Activated B cell treated with CpG ODN at 0.5 μM for 24 hours (primary cell): ENCODE measurements at regions of chrX and their contacts with region 1.

Region 1: GRCh38 chrX:56563231-56564161 is at the start of gene UBQLN2:
- DNase-seq: peak; percentile 61
- ATAC-seq: peak; percentile 87
- H3K4me3 Mint-ChIP-seq: peak within 1 kb of the TSS; percentile 88
- H3K27ac Mint-ChIP-seq: peak within 1 kb of the TSS; percentile 96
- H3K4me1 Mint-ChIP-seq: peaks cover 28% of the 10 kb centered on the region
- H3K27me3 Mint-ChIP-seq: no peaks in the 10 kb centered on the region
- CTCF ChIP-seq: no peak
- total RNA-seq, gene UBQLN2: 21.3 and 26.6 TPM in 2 replicates

Region 2: DNA sequence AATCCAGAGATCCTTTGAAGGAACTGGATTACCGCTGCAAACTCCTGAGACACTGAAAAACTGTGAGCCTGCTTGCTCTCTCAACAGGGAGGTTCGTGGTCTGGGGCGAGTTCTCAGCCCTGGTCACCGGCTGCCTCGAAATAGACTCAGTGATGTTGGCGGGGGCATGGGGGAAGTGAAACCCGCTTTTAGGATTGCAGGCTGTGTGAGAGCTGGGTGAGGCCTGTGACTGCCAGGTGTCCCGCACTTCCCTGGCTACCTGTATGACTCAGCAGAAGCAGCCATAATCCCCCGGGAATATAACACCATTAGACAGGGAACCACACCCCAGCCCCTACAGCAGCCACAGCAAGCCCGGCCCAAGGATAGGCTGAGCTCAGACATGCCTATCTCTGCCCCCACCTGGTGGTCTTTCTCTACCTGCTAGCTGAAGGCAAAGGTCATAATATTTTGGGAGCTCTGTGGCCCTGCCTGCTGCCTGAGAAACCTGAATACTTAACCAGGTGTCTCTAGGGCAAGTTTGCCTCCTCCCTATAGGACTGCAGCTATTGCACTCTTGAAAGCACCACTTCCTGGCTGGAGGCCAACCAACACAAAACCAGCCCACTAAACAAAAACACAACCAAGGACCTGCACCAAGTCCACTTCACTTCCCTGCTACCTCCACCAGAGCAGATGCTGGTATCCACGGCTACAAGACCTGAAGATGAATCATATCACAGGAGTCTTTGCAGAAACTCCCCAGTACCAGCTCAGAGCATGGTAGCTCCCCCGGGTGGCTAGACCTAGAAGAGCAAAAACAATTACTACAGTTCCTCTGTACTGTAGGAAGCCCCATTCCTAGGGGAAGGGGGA is 643.9 kb before region 1 on chrX:
- CTCF ChIA-PET with region 1: no interaction called
- POLR2A ChIA-PET with region 1: no interaction called
- intact Hi-C with region 1: loop called (anchors 5 kb)
- DNase-seq: peak; percentile 50
- ATAC-seq: peak; percentile 88
- H3K4me3 Mint-ChIP-seq: peak overlapping the region; percentile 52
- H3K27ac Mint-ChIP-seq: peak overlapping the region; percentile 79
- H3K4me1 Mint-ChIP-seq: peaks cover 38% of the 10 kb centered on the region
- H3K27me3 Mint-ChIP-seq: no peaks in the 10 kb centered on the region
- CTCF ChIP-seq: no peak

Region 3: GRCh38 chrX:56232221-56233082 is 331.0 kb before region 1 on chrX and contains the start of gene KLF8:
- CTCF ChIA-PET with region 1: no interaction called
- POLR2A ChIA-PET with region 1: no interaction called
- intact Hi-C with region 1: loop called (anchors 5 kb)
- DNase-seq: peak; percentile 25
- ATAC-seq: peak; percentile 83
- H3K4me3 Mint-ChIP-seq: peak within 1 kb of the TSS; percentile 88
- H3K27ac Mint-ChIP-seq: peak within 1 kb of the TSS; percentile 83
- H3K4me1 Mint-ChIP-seq: peaks cover 38% of the 10 kb centered on the region
- H3K27me3 Mint-ChIP-seq: no peaks in the 10 kb centered on the region
- CTCF ChIP-seq: no peak
- total RNA-seq, gene KLF8: 15.2 and 17.8 TPM in 2 replicates

Region 4: DNA sequence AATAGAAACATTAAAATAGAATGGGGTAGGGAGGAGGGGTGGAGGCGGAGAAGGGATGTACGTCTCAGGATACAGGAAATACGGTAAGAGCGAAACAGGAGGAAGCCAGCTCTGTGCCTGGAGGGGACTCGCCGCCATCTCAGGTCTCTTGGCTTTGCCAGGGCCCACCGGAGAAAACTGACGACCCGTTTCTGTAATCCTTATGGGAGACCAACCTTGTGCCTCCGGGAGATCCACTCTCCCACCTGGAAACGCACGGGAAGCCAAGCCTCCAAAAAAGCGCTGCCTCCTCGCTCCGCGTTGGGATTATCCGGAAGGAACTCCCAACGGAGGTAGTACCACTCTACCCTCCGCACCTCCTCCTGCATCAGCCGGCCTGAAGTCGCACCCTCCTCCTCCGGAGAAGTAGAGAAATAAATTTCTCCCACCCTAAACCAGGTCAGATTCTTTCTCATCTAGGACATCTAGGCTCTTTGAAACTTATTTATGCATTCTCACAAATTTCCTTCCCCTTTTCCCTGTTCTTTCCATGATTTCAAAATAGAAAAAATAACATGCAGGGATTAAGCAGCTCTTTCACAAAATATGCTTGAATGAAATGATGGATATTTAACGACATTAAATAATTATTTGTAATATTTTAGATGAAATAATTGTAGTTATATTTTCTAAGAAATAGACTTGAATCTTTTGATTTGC is 165.8 kb after region 1 on chrX and contains the start of gene NBDY:
- CTCF ChIA-PET with region 1: no interaction called
- POLR2A ChIA-PET with region 1: interaction called, 7 read pairs
- intact Hi-C with region 1: loop called (anchors 2 kb)
- DNase-seq: peak; percentile 20
- ATAC-seq: peak; percentile 78
- H3K4me3 Mint-ChIP-seq: peak within 1 kb of the TSS; percentile 94
- H3K27ac Mint-ChIP-seq: peak within 1 kb of the TSS; percentile 92
- H3K4me1 Mint-ChIP-seq: peaks cover 25% of the 10 kb centered on the region
- H3K27me3 Mint-ChIP-seq: no peaks in the 10 kb centered on the region
- CTCF ChIP-seq: no peak
- total RNA-seq, gene NBDY: 30.0 and 41.0 TPM in 2 replicates

Region 5: DNA sequence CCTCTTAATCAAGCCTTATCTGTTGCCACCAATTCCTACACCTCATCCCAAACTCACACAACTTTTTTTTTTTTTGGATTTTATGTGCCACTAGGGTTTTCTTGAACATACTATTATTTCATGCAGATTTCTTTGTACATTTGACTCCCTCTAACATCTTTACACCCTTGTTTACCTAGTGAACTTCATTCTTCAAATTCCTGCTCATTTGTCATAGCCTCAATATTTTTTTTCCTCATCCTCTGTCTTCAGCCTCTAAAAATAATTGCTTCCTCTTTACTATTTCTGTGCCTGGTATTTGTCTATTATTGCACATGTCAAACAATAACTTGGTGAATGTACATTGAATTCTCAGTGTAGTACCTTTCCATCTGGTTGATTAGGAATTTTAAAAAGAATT is 187.6 kb after region 1 on chrX:
- CTCF ChIA-PET with region 1: no interaction called
- POLR2A ChIA-PET with region 1: no interaction called
- intact Hi-C with region 1: no loop called
- DNase-seq: no peak
- ATAC-seq: no peak
- H3K4me3 Mint-ChIP-seq: no peak overlapping the region
- H3K27ac Mint-ChIP-seq: no peak overlapping the region
- H3K4me1 Mint-ChIP-seq: peaks cover 27% of the 10 kb centered on the region
- H3K27me3 Mint-ChIP-seq: no peaks in the 10 kb centered on the region
- CTCF ChIP-seq: no peak

Region 6: DNA sequence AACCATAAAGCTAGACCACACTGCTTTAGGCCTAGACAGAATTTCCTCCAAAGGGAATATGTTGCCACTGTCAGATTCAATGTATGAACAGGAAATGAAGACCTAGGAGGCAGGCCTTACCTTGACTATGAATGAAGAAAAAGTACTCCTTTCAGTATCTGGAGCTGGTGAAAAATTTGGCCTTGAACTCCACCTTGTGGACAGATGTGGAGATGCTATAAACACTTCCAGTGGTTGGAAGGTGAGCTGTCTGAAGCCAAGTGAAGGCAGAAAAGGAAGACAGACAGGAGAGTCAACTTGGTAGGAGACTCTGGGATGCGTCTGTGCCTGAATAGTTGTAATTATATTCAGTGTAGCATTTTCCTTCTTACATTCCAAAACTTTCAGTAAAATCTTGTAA is 414.7 kb after region 1 on chrX:
- CTCF ChIA-PET with region 1: no interaction called
- POLR2A ChIA-PET with region 1: no interaction called
- intact Hi-C with region 1: loop called (anchors 10 kb)
- DNase-seq: no peak
- ATAC-seq: peak; percentile 66
- H3K4me3 Mint-ChIP-seq: no peak overlapping the region
- H3K27ac Mint-ChIP-seq: no peak overlapping the region
- H3K4me1 Mint-ChIP-seq: no peaks in the 10 kb centered on the region
- H3K27me3 Mint-ChIP-seq: no peaks in the 10 kb centered on the region
- CTCF ChIP-seq: no peak

Region 7: DNA sequence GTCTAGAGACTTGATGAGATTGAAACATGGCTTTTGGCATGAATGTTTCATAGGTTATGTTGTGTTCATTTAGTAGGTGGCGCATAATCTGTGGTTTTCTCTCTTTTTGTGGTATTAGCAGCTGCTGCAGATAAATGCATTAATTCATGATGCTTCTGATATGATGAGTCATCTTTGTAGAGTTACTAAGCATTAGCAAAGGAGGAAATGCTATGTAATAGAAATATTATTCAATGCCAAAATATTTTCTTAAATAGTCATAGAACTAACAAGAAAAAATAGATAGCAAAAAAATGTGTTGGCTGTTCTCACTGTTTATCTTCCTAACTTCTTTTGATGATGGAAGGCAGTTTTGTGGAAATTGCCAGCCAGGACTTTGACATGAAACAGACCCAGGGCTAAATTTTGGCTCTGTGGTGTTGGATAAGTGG is 1031.9 kb after region 1 on chrX:
- CTCF ChIA-PET with region 1: no interaction called
- POLR2A ChIA-PET with region 1: no interaction called
- intact Hi-C with region 1: loop called (anchors 2 kb)
- DNase-seq: no peak
- ATAC-seq: no peak
- H3K4me3 Mint-ChIP-seq: peak overlapping the region; percentile 74
- H3K27ac Mint-ChIP-seq: peak overlapping the region; percentile 35
- H3K4me1 Mint-ChIP-seq: peaks cover 49% of the 10 kb centered on the region
- H3K27me3 Mint-ChIP-seq: no peaks in the 10 kb centered on the region
- CTCF ChIP-seq: no peak

Region 8: DNA sequence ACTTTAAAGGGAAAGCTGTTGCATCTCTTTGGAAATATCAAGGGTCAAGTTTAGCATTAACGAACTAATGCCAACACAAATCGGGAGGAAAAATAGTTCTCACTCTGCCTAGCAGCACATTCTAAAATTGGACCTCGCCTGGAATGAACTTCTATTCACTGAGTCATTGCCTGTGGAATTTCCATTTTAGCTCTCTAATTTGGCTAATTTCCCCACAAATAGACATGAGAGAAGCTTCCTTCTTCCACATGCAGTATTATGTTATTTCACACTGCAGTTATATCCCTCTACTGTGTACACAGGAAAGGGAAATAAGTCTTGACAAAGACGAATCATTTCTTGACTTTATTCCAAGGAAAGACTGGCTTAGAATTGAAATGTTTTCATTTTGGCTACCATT is 1337.5 kb after region 1 on chrX:
- CTCF ChIA-PET with region 1: no interaction called
- POLR2A ChIA-PET with region 1: no interaction called
- intact Hi-C with region 1: loop called (anchors 10 kb)
- DNase-seq: no peak
- ATAC-seq: no peak
- H3K4me3 Mint-ChIP-seq: no peak overlapping the region
- H3K27ac Mint-ChIP-seq: no peak overlapping the region
- H3K4me1 Mint-ChIP-seq: peaks cover 14% of the 10 kb centered on the region
- H3K27me3 Mint-ChIP-seq: no peaks in the 10 kb centered on the region
- CTCF ChIP-seq: no peak